ENCODE measurements at regions of chr6 and their contacts with region 1.

Region 1: DNA sequence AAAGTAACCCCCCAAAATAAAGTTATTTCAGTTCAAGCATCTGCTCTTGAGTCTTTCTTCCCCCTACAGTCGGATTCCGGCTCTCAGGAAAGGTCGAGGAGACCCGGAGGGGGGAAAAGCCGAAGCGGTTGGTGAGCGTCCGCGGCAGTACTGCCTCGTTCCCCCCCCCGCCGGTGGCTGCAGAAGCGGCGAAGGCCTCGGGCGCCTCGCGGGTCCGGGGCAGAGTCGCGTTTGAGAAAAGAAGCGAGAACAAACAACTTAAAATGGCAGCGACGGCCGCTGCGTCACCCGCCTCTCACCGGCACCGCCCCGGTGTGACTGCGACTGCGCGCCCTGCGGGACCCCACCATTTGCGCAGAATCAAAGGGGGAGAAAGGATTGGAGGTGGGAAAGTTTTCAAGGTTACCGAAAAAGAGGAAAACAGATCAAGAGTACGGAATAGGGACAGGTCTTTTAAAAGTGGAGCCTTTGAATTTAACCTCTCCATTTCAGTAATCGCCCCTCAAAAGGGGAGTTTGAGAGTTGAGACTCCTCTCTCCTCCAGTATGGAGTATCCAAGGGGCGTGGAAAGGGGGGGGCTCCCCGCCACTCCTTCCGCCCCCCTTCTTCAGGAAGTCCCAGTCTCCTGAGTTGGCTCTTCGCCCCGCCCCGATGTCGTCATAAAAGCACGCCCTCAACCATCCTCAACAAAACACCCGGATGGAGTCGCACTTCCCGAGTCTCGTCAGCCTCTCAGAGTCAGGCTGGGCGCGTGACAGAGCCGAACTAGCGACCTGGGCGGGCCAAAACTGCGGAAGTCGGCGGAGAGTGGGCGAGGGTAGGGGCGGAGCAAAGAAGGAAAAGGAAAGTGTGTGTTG is 1.9 kb upstream of the C6orf62 start:
- DNase-seq: peak; percentile 100
- H3K4me3 Mint-ChIP-seq: peak overlapping the region; percentile 99
- H3K27ac Mint-ChIP-seq: peak overlapping the region; percentile 100
- H3K4me1 Mint-ChIP-seq: peaks cover 33% of the 10 kb centered on the region
- H3K27me3 Mint-ChIP-seq: no peaks in the 10 kb centered on the region

Region 2: DNA sequence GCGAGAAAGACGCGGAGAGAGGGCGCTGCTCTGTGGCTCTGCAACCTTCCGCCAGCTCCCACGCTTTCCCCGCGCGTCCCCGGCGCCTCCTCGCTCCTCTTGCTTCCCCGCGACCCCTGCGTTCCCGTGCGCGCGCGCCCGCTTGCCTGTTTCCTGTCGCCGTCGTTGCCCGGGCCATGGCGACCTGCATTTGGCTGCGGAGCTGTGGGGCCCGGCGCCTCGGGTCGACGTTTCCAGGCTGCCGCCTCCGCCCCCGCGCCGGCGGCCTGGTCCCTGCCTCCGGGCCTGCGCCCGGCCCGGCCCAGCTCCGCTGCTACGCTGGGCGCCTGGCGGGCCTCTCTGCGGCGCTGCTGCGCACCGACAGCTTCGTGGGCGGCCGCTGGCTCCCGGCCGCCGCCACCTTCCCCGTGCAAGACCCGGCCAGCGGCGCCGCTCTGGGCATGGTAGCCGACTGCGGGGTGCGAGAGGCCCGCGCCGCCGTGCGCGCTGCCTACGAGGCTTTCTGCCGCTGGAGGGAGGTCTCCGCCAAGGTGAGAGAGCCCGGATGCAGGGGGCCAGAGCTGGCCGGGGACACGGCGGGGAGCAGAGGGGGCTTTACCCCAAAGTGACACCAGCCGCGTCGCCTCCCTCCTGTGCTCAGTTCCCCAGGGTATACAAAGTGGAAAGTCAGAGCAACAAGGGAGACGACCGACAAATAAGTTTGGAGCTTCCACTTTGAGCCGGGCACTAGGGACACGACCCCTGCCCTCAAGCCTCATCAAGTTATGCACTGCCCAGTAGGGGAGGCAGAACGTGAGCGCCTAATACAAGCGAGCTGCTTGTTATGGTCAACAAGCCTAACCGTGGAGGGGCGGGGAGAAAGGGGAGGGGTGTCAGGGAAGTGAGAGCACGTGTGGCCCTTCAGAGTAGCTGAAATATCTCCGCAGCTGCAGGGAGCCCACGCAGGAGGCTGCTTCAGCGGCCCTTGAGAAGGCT is 225.7 kb before region 1 on chr6 and contains the start of gene ALDH5A1:
- intact Hi-C with region 1: loop called (anchors 1 kb)
- DNase-seq: peak; percentile 92
- H3K4me3 Mint-ChIP-seq: peak within 1 kb of the TSS; percentile 84
- H3K27ac Mint-ChIP-seq: peak within 1 kb of the TSS; percentile 49
- H3K4me1 Mint-ChIP-seq: peaks cover 14% of the 10 kb centered on the region
- H3K27me3 Mint-ChIP-seq: peaks cover 2% of the 10 kb centered on the region
- total RNA-seq, gene ALDH5A1: 11.7 TPM in 2 replicates

Region 3: DNA sequence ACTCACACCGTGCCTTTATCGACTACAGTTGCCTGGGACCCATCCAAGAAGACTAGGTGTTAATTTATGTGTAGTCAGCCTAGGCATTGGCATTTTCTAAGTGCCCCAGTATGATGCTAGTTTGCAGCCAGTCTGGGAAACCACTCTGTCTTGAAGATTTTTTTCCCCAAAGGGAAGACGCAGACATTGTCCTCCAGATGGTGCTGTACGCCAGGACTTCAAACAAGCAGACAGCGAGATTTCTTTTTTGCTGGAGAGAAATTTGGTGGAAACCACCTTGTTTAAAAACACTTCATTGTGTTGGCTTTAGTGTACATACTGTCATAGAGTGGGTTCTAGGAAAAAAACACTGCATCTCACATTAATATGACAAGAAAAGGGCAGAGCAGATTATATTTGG is 196.0 kb before region 1 on chr6:
- intact Hi-C with region 1: no loop called
- DNase-seq: peak; percentile 73
- H3K4me3 Mint-ChIP-seq: no peak overlapping the region
- H3K27ac Mint-ChIP-seq: no peak overlapping the region
- H3K4me1 Mint-ChIP-seq: peaks cover 10% of the 10 kb centered on the region
- H3K27me3 Mint-ChIP-seq: no peaks in the 10 kb centered on the region

Region 4: GRCh38 chr6:24666641-24667377 is 54.0 kb before region 1 on chr6 and contains the starts of genes ACOT13 and TDP2:
- intact Hi-C with region 1: loop called (anchors 1 kb)
- DNase-seq: peak; percentile 99
- H3K4me3 Mint-ChIP-seq: peak within 1 kb of the TSS; percentile 90
- H3K27ac Mint-ChIP-seq: peak within 1 kb of the TSS; percentile 98
- H3K4me1 Mint-ChIP-seq: peaks cover 36% of the 10 kb centered on the region
- H3K27me3 Mint-ChIP-seq: no peaks in the 10 kb centered on the region
- total RNA-seq, gene ACOT13: 25.3 and 30.0 TPM in 2 replicates
- total RNA-seq, gene TDP2: 45.3 and 45.9 TPM in 2 replicates

Region 5: DNA sequence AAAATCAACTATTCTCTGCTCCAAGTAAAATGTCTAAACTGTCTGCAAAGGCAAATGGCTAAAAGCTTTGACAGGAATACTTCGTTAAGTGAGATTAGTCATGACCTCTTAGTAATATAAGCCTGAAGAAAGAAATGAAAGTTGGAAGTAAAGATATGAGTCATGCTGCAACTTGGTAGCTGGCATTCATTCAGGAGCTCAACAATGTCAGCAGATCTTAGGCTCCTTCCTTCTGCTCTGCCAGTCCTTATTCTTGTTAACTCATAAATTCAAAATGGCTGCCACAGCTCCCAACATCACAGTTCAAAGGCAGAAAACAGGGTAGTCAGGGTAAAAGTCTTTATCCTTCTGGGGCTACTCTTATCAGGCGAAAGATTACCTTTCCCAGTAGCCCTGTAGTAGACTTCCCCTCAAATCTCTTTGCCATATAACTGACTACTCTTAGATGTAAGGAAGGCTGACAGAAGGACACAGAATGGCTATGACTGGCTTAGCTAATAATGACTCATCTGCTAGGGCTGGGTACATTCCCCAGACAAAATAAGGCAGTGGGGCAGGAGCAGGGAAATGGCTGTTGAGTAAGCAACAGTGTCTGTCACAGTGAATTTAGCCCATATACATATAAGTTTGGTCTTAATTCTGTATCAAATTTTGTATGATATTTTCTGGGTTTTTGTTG is 22.6 kb after region 1 on chr6:
- intact Hi-C with region 1: loop called (anchors 1 kb)
- DNase-seq: peak; percentile 62
- H3K4me3 Mint-ChIP-seq: peak overlapping the region; percentile 40
- H3K27ac Mint-ChIP-seq: peak overlapping the region; percentile 81
- H3K4me1 Mint-ChIP-seq: peaks cover 15% of the 10 kb centered on the region
- H3K27me3 Mint-ChIP-seq: no peaks in the 10 kb centered on the region

Region 6: GRCh38 chr6:24766680-24767462 is 46.0 kb after region 1 on chr6:
- intact Hi-C with region 1: loop called (anchors 2 kb)
- DNase-seq: no peak
- H3K4me3 Mint-ChIP-seq: no peak overlapping the region
- H3K27ac Mint-ChIP-seq: no peak overlapping the region
- H3K4me1 Mint-ChIP-seq: peaks cover 6% of the 10 kb centered on the region
- H3K27me3 Mint-ChIP-seq: no peaks in the 10 kb centered on the region

Region 7: GRCh38 chr6:24774696-24775519 is 54.1 kb after region 1 on chr6 and contains the start of gene GMNN:
- intact Hi-C with region 1: loop called (anchors 1 kb)
- DNase-seq: peak; percentile 100
- H3K4me3 Mint-ChIP-seq: peak within 1 kb of the TSS; percentile 99
- H3K27ac Mint-ChIP-seq: peak within 1 kb of the TSS; percentile 99
- H3K4me1 Mint-ChIP-seq: peaks cover 32% of the 10 kb centered on the region
- H3K27me3 Mint-ChIP-seq: no peaks in the 10 kb centered on the region
- total RNA-seq, gene GMNN: 71.0 and 76.8 TPM in 2 replicates

Region 8: GRCh38 chr6:25017932-25018567 is 297.2 kb after region 1 on chr6:
- intact Hi-C with region 1: loop called (anchors 5 kb)
- DNase-seq: peak; percentile 93
- H3K4me3 Mint-ChIP-seq: peak overlapping the region; percentile 31
- H3K27ac Mint-ChIP-seq: peak overlapping the region; percentile 84
- H3K4me1 Mint-ChIP-seq: peaks cover 33% of the 10 kb centered on the region
- H3K27me3 Mint-ChIP-seq: no peaks in the 10 kb centered on the region

Region 9: GRCh38 chr6:25490018-25490801 is 769.4 kb after region 1 on chr6:
- intact Hi-C with region 1: no loop called
- DNase-seq: peak; percentile 91
- H3K4me3 Mint-ChIP-seq: no peak overlapping the region
- H3K27ac Mint-ChIP-seq: no peak overlapping the region
- H3K4me1 Mint-ChIP-seq: peaks cover 2% of the 10 kb centered on the region
- H3K27me3 Mint-ChIP-seq: no peaks in the 10 kb centered on the region

Measured in activated CD4-positive, alpha-beta T cell treated with anti-CD3 and anti-CD28 coated beads, Interleukin-2, amount 10 ng/mL, durations not matched to agents 24 days and 14 days (primary cell).